ENCODE measurements at regions of chr18 and their contacts with region 1.

Region 1: DNA sequence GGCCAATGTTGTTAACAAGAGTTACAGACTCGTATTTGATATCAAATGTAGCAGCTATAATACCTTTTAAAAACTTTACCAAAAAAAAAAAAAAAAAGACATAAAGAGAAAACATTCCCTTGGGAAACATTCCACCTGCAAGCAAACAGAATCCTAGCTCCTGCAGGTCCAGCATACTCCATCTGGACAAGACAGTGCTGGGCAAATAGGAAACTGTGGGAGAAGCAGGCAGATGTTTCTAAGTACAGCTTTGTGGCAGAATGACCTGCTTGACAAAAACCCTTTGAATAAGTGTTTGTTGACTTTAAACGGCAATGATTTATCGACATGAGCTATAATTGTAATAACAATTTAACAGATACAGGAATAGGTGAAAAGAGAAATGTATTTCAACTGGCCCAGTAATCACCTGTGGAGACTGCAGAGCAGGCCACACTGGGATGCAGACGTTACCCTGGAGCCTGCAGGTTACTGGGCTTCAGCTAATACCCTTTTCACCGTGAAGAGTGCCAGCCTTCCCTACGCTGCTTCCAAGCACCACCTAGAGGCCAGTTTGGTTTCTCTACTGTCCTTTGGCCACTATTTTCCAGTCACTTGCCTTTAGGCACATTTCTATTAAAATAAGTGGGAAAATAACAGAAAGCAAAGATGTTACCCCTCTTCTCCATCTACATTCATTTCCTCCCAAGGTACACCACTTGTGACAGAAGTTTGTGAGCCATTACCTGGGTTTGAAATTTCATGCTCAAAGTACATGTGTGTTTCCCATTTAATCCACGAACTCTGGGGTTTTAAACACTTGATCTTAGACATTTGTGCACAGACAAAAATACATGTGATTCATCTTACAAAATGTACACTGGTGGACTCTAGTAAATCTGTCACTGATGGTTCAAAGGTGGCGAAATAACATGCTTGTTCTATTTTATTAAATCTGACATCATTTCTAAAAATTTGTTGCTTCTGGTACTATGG is 96.9 kb upstream of the ZNF397 start:
- DNase-seq: peak; percentile 87

Region 2: DNA sequence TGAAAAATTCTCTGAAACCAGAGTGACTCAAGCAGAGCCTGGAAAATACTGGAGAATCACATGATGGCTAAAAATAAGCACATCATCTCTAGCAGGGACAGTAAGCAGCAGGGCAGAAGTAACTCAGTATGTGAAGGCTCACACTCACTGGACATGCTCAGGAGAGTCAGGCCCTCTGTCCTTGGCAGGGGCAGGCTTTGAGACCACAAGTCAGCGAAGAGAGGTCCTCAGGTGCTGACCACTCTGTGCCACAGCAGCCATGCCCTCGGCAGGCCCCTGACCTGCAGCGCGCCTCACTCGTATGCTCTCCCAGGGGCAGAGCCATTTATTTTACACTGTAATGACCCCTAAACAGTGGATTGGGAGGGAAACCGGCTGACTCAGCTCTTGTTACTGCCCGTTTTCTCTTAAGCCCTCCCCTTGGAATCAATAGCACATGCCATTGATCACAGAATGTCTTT is 25.9 kb before region 1 on chr18:
- CTCF ChIA-PET with region 1: interaction called, 12 read pairs
- POLR2A ChIA-PET with region 1: no interaction called
- DNase-seq: no peak

Measured in HEK293T (cell line).